Activated CD4-positive, alpha-beta T cell treated with anti-CD3 and anti-CD28 coated beads, Interleukin-2, amount 10 ng/mL, durations not matched to agents 24 days and 14 days (primary cell): ENCODE measurements at regions of chr14 and their contacts with region 1.

Region 1: DNA sequence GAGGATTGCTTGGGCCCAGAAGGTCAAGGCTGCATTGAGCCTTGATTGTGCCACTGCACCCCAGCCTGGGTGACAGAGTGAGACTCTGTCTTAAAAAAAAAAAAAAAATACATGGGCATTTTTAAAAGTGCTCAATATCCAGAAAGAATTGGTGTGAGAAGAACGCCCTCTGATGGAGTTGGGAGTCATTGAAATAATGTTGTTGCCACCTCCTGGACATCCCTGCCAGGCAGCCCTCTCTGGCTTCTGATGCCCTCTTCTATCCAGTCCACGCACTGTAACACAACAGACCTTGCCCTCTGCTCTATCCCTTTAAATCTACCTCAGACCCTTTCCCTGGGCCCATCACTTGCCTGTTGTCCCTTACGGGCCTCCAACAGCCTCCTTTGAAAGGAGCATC is 4.9 kb downstream of the PTGDR start:
- DNase-seq: peak; percentile 75
- H3K4me3 Mint-ChIP-seq: no peak overlapping the region
- H3K27ac Mint-ChIP-seq: no peak overlapping the region
- H3K4me1 Mint-ChIP-seq: peaks cover 20% of the 10 kb centered on the region
- H3K27me3 Mint-ChIP-seq: peaks cover 69% of the 10 kb centered on the region

Region 2: GRCh38 chr14:52068615-52069303 is 203.6 kb before region 1 on chr14 and contains the start of gene NID2:
- intact Hi-C with region 1: loop called (anchors 10 kb)
- DNase-seq: peak; percentile 84
- H3K4me3 Mint-ChIP-seq: peak within 1 kb of the TSS; percentile 68
- H3K27ac Mint-ChIP-seq: no peak within 1 kb of the TSS
- H3K4me1 Mint-ChIP-seq: peaks cover 17% of the 10 kb centered on the region
- H3K27me3 Mint-ChIP-seq: peaks cover 60% of the 10 kb centered on the region
- total RNA-seq, gene NID2: 0.09 TPM in 2 replicates

Region 3: GRCh38 chr14:52253503-52253902 is 18.9 kb before region 1 on chr14:
- intact Hi-C with region 1: no loop called
- DNase-seq: no peak
- H3K4me3 Mint-ChIP-seq: no peak overlapping the region
- H3K27ac Mint-ChIP-seq: no peak overlapping the region
- H3K4me1 Mint-ChIP-seq: no peaks in the 10 kb centered on the region
- H3K27me3 Mint-ChIP-seq: peaks cover 33% of the 10 kb centered on the region